ENCODE measurements at regions of chr9 and their contacts with region 1.

Region 1: GRCh38 chr9:20790721-20791120 is 106.7 kb downstream of the FOCAD start:
- DNase-seq: no peak
- ATAC-seq: no peak
- H3K4me3 ChIP-seq: no peak overlapping the region
- H3K4me3 Mint-ChIP-seq: no peak overlapping the region
- H3K27ac ChIP-seq: no peak overlapping the region
- H3K27ac Mint-ChIP-seq: no peak overlapping the region
- H3K4me1 ChIP-seq: no peaks in the 10 kb centered on the region
- H3K4me1 Mint-ChIP-seq: no peaks in the 10 kb centered on the region
- H3K27me3 ChIP-seq: no peaks in the 10 kb centered on the region
- H3K27me3 Mint-ChIP-seq: no peaks in the 10 kb centered on the region
- CTCF ChIP-seq: no peak

Region 2: GRCh38 chr9:20437476-20437875 is 353.2 kb before region 1 on chr9:
- CTCF ChIA-PET with region 1: no interaction called
- POLR2A ChIA-PET with region 1: no interaction called
- intact Hi-C with region 1: no loop called
- DNase-seq: no peak
- ATAC-seq: no peak
- H3K4me3 ChIP-seq: no peak overlapping the region
- H3K4me3 Mint-ChIP-seq: no peak overlapping the region
- H3K27ac ChIP-seq: no peak overlapping the region
- H3K27ac Mint-ChIP-seq: no peak overlapping the region
- H3K4me1 ChIP-seq: no peaks in the 10 kb centered on the region
- H3K4me1 Mint-ChIP-seq: peaks cover 43% of the 10 kb centered on the region
- H3K27me3 ChIP-seq: no peaks in the 10 kb centered on the region
- H3K27me3 Mint-ChIP-seq: no peaks in the 10 kb centered on the region
- CTCF ChIP-seq: no peak

Region 3: DNA sequence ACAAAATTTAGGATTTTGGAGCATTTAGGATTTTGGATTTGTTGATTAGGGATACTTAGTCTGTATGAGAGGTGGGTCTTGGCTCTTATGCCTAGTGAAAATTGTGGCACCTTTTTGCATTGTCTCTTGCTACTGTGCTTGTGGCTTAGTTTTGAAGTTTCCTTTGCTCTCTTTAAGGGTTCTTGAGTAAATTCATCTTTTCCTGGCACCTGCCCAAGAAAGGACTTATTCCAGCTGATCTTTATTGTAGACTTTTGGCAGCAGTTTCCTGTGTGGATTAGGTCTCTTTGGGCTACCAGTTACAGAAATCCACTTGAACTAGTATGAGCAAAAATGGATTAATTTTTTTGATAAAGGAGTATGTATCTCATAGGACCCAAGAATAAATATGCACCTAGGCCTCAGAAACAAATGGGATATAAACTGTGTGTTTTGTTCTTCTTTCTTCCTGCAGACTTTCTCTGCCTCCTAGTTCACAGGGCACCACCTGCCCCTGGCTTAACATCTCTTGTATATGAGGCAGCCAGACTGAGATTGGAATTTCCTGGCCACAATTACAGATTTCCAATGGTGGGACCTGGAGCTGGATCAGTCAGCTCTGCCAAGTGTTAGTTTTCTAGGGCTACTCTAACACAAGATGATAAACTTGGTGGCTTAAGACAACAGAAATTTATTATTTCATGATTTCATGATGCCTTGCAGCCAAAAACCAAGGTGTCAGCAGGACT is 62.1 kb before region 1 on chr9:
- CTCF ChIA-PET with region 1: no interaction called
- POLR2A ChIA-PET with region 1: no interaction called
- intact Hi-C with region 1: no loop called
- DNase-seq: no peak
- ATAC-seq: no peak
- H3K4me3 ChIP-seq: no peak overlapping the region
- H3K4me3 Mint-ChIP-seq: no peak overlapping the region
- H3K27ac ChIP-seq: no peak overlapping the region
- H3K27ac Mint-ChIP-seq: no peak overlapping the region
- H3K4me1 ChIP-seq: no peaks in the 10 kb centered on the region
- H3K4me1 Mint-ChIP-seq: peaks cover 21% of the 10 kb centered on the region
- H3K27me3 ChIP-seq: no peaks in the 10 kb centered on the region
- H3K27me3 Mint-ChIP-seq: no peaks in the 10 kb centered on the region
- CTCF ChIP-seq: no peak

Region 4: DNA sequence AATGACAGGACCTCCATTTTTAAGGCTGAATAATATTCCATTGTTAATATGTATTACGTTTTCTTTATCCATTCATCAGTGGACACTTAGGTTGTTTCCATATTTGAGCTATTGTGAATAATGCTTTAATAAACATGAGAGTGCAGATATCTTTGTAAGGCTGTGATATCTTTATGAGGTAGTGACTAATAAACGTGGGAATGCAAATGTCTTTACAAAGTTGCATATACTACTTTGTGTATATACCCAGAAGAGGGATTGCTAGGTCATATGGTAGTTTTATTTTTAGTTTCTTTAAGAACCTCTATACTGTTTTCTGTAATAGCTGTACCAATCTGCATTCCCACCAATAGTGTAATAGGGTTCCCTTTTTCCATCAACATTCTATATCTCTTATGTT is 42.1 kb after region 1 on chr9:
- CTCF ChIA-PET with region 1: no interaction called
- POLR2A ChIA-PET with region 1: no interaction called
- intact Hi-C with region 1: no loop called
- DNase-seq: no peak
- ATAC-seq: no peak
- H3K4me3 ChIP-seq: no peak overlapping the region
- H3K4me3 Mint-ChIP-seq: no peak overlapping the region
- H3K27ac ChIP-seq: no peak overlapping the region
- H3K27ac Mint-ChIP-seq: no peak overlapping the region
- H3K4me1 ChIP-seq: no peaks in the 10 kb centered on the region
- H3K4me1 Mint-ChIP-seq: no peaks in the 10 kb centered on the region
- H3K27me3 ChIP-seq: no peaks in the 10 kb centered on the region
- H3K27me3 Mint-ChIP-seq: no peaks in the 10 kb centered on the region
- CTCF ChIP-seq: no peak

Region 5: DNA sequence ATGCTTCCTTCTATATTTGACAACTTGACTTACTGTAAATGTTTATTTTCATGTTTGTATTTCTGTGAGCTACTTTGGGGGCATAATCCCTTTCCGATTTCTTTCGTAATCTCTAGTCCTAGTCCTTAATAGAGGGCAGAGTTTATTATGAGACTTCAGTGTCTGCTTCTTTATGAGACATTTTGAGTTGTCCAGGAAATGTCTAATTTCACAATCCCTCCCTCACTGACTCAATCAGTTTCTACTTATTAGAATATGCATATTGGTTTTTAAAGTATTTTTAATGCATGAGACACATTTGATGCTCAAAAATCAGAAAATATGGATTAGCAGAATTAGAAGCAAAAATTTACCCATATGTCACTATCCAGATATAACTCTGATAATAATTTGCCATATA is 54.2 kb after region 1 on chr9:
- CTCF ChIA-PET with region 1: no interaction called
- POLR2A ChIA-PET with region 1: no interaction called
- intact Hi-C with region 1: loop called in 1 of 2 experiments (anchors 5 kb)
- DNase-seq: no peak
- ATAC-seq: no peak
- H3K4me3 ChIP-seq: no peak overlapping the region
- H3K4me3 Mint-ChIP-seq: no peak overlapping the region
- H3K27ac ChIP-seq: no peak overlapping the region
- H3K27ac Mint-ChIP-seq: no peak overlapping the region
- H3K4me1 ChIP-seq: no peaks in the 10 kb centered on the region
- H3K4me1 Mint-ChIP-seq: peaks cover 3% of the 10 kb centered on the region
- H3K27me3 ChIP-seq: no peaks in the 10 kb centered on the region
- H3K27me3 Mint-ChIP-seq: no peaks in the 10 kb centered on the region
- CTCF ChIP-seq: no peak